Posterior cingulate gyrus (tissue), 11 donors: ENCODE measurements at regions of chr14 and their contacts with region 1.

Region 1: DNA sequence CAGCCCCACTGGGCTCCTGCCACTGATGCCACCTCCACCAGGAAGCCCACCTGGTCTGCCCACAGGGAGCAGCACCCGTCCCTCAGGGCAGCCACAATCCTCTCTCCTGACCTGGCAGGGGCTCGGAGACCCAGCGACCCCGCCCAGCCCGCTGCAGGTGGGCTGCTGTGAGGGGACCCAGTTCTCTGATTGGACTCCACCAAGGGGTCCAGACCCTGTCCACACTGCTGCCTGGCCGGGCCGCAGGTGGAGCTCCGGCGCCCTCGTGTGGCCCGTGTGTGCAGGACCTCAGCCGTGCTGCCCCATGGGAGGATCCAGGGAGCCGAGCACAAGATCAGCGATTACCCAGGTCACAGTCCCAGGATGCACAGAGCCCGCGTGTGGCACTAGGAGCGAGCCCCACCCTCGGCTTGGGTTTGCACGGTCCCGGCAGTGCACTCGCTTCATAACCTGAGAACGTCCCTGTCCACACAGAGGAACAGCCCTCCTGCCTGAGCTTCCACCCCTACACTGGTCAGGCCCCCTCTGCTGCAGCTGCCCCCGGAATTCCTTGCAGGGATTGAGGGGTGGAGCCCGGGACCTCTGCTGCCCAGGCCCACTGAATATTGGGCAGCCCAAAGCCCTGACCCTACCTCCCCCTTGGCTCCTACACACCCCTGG is 35.4 kb upstream of the TMEM179 start:
- DNase-seq: peak; percentile 56 to 96 (median 76)

Region 2: GRCh38 chr14:104586832-104587620 is 53.0 kb before region 1 on chr14:
- intact Hi-C with region 1: loop called (anchors 5 kb)
- DNase-seq: peak in 8 of 10 donors; percentile 39 to 93 (median 52)